ENCODE measurements at regions of chr1 and their contacts with region 1.

Region 1: DNA sequence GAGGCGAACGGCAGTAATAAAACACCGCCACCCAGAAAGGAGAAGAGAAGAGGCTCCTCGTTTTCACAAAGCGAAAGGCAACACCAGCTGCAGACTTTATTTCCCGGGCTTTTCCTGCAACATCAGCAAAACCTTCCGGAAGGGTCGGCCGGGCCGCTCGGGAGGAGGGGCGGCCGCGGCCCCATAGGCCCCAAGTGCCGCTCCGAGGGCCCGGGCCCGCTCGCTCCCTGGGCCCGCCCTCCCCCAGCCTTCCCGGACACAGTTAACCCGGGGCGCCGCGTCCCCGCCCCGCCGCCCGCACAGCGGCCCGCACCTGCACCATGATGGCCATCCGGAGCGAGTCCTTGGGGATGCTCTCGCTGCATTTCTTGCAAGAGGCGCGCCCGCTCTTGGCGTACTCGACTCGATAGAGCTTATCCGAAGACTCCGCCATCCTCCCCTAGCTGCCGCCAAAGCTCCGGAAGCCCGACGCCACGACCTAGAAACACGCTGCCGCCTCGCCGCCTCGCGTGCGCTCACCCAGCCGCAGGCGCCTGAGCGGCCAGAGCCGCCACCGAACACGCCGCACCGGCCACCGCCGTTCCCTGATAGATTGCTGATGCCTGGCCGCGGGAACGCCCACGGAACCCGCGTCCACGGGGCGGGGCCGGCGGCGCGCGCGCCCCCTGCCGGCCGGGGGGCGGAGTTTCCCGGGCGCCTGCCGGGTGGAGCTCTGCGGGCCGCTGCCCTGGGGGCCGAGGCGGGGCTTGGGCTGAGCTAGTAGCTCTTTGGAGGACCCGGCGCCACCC is at the start of gene PARP1:
- DNase-seq: peak; percentile 89 to 92
- H3K4me3 ChIP-seq: peak within 1 kb of the TSS; percentile 86
- H3K4me3 Mint-ChIP-seq: peak within 1 kb of the TSS; percentile 86
- H3K27ac Mint-ChIP-seq: peak within 1 kb of the TSS; percentile 74
- H3K4me1 ChIP-seq: peaks cover 21% of the 10 kb centered on the region
- H3K4me1 Mint-ChIP-seq: peaks cover 21% of the 10 kb centered on the region
- H3K27me3 ChIP-seq: no peaks in the 10 kb centered on the region
- H3K27me3 Mint-ChIP-seq: no peaks in the 10 kb centered on the region
- CTCF ChIP-seq: peak; percentile 33 to 84
- total RNA-seq, gene PARP1: 127 and 136 TPM in 2 replicates

Region 2: DNA sequence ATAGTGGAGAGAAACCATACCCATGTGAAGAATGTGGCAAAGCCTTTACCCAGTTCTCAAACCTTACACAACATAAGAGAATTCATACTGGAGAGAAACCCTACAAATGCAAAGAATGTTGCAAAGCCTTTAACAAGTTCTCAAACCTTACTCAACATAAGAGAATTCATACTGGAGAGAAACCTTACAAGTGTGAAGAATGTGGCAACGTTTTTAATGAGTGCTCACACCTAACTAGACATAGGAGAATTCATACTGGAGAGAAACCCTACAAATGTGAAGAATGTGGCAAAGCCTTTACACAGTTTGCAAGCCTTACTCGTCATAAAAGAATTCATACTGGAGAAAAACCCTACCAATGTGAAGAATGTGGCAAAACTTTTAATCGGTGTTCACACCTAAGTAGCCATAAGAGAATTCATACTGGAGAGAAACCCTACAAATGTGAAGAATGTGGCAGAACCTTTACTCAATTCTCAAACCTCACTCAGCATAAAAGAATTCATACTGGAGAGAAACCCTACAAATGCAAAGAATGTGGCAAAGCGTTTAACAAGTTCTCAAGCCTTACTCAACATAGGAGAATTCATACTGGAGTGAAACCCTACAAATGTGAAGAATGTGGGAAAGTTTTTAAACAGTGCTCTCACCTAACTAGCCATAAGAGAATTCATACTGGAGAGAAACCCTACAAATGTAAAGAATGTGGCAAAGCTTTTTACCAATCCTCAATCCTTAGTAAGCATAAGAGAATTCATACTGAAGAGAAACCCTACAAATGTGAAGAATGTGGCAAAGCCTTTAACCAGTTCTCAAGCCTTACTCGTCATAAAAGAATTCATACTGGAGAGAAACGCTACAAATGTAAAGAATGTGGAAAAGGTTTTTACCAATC is 1247.4 kb after region 1 on chr1:
- CTCF ChIA-PET with region 1: no interaction called
- POLR2A ChIA-PET with region 1: interaction called, 17 read pairs
- intact Hi-C with region 1: no loop called
- DNase-seq: no peak
- H3K4me3 ChIP-seq: no peak overlapping the region
- H3K4me3 Mint-ChIP-seq: no peak overlapping the region
- H3K27ac Mint-ChIP-seq: no peak overlapping the region
- H3K4me1 ChIP-seq: no peaks in the 10 kb centered on the region
- H3K4me1 Mint-ChIP-seq: no peaks in the 10 kb centered on the region
- H3K27me3 ChIP-seq: no peaks in the 10 kb centered on the region
- H3K27me3 Mint-ChIP-seq: no peaks in the 10 kb centered on the region
- CTCF ChIP-seq: no peak